CD8-positive, alpha-beta T cell (primary cell): ENCODE measurements at regions of chr1 and their contacts with region 1.

Region 1: DNA sequence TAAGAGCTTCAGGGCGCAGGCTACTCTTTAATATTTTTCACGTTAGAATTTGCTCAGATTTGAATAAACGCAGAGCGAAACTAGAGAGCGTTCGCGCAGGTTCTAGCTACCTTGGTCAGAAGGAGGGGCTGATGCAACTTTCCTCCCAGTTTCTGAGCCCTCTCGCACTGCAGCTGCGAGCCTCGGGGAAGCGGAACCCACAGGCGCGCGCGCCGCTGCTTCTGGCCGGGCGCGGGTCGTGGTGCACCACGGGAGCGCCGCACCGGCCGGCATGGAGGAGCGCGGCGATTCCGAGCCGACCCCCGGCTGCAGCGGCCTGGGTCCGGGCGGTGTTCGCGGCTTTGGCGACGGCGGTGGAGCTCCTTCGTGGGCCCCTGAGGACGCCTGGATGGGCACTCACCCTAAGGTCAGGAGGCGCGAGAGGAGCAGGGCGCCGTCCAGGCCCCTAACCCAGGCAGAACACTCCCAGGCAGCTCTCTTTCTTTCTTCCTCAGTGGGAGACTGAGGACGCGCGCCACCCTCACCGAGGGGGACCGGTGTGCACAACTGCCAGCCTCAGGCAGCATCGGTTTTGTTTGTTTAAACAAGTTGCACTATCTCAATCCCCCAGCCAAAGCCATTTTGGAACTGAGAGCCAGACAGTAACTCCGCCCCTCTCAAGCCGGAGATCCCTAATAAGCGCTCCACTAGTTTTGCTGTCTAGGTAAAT is at the start of gene TSEN15:
- DNase-seq: peak; percentile 49 to 89 (median 76)
- ATAC-seq: peak; percentile 95
- H3K4me3 ChIP-seq: peak within 1 kb of the TSS; percentile 86 to 94
- H3K4me3 Mint-ChIP-seq: peak within 1 kb of the TSS; percentile 98
- H3K27ac ChIP-seq: peak within 1 kb of the TSS; percentile 66 to 78
- H3K27ac Mint-ChIP-seq: peak within 1 kb of the TSS; percentile 98
- H3K4me1 ChIP-seq: peaks cover 21% of the 10 kb centered on the region
- H3K4me1 Mint-ChIP-seq: peaks cover 47% of the 10 kb centered on the region
- H3K27me3 ChIP-seq: no peaks in the 10 kb centered on the region
- H3K27me3 Mint-ChIP-seq: peaks cover 14% of the 10 kb centered on the region
- CTCF ChIP-seq: no peak
- total RNA-seq, gene TSEN15: 14.8 to 15.9 TPM

Region 2: GRCh38 chr1:184036517-184036949 is 15.1 kb before region 1 on chr1:
- CTCF ChIA-PET with region 1: no interaction called
- POLR2A ChIA-PET with region 1: interaction called, 4 read pairs
- intact Hi-C with region 1: loop called (anchors 2 kb)
- DNase-seq: peak in 5 of 9 experiments; percentile 12 to 56 (median 44)
- ATAC-seq: peak; percentile 38
- H3K4me3 ChIP-seq: peak overlapping the region; percentile 45 to 57
- H3K4me3 Mint-ChIP-seq: peak overlapping the region; percentile 71
- H3K27ac ChIP-seq: no peak overlapping the region
- H3K27ac Mint-ChIP-seq: no peak overlapping the region
- H3K4me1 ChIP-seq: peaks cover 7% of the 10 kb centered on the region
- H3K4me1 Mint-ChIP-seq: peaks cover 15% of the 10 kb centered on the region
- H3K27me3 ChIP-seq: peaks cover 0 to 3% of the 10 kb centered on the region in 2 experiments
- H3K27me3 Mint-ChIP-seq: peaks cover 46% of the 10 kb centered on the region
- CTCF ChIP-seq: no peak

Region 3: GRCh38 chr1:184118046-184118445 is 66.4 kb after region 1 on chr1:
- CTCF ChIA-PET with region 1: no interaction called
- POLR2A ChIA-PET with region 1: no interaction called
- intact Hi-C with region 1: no loop called
- DNase-seq: no peak
- ATAC-seq: no peak
- H3K4me3 ChIP-seq: no peak overlapping the region
- H3K4me3 Mint-ChIP-seq: no peak overlapping the region
- H3K27ac ChIP-seq: no peak overlapping the region
- H3K27ac Mint-ChIP-seq: no peak overlapping the region
- H3K4me1 ChIP-seq: no peaks in the 10 kb centered on the region
- H3K4me1 Mint-ChIP-seq: no peaks in the 10 kb centered on the region
- H3K27me3 ChIP-seq: no peaks in the 10 kb centered on the region
- H3K27me3 Mint-ChIP-seq: no peaks in the 10 kb centered on the region
- CTCF ChIP-seq: no peak